ENCODE measurements at regions of chr20 and their contacts with region 1.

Region 1: GRCh38 chr20:45311589-45312211 is 3.6 kb upstream of the MATN4 start:
- DNase-seq: peak; percentile 68 to 87 (median 71)
- H3K4me3 ChIP-seq: no peak overlapping the region
- H3K27ac ChIP-seq: no peak overlapping the region
- H3K4me1 ChIP-seq: no peaks in the 10 kb centered on the region
- H3K27me3 ChIP-seq: peaks cover 4% of the 10 kb centered on the region
- CTCF ChIP-seq: peak; percentile 75

Region 2: GRCh38 chr20:45771182-45771759 is 459.6 kb after region 1 on chr20:
- intact Hi-C with region 1: loop called (anchors 10 kb)
- DNase-seq: peak; percentile 83 to 93 (median 90)
- H3K4me3 ChIP-seq: no peak overlapping the region
- H3K27ac ChIP-seq: no peak overlapping the region
- H3K4me1 ChIP-seq: peaks cover 0 to 3% (median 0%) of the 10 kb centered on the region in 3 donors
- H3K27me3 ChIP-seq: no peaks in the 10 kb centered on the region
- CTCF ChIP-seq: peak; percentile 96